CD8-positive, alpha-beta T cell (primary cell): ENCODE measurements at regions of chrX and their contacts with region 1.

Region 1: GRCh38 chrX:52261463-52262194 is 76.9 kb downstream of the MAGED4 start:
- DNase-seq: peak; percentile 66 to 96 (median 86)
- ATAC-seq: peak; percentile 95
- H3K4me3 ChIP-seq: peak overlapping the region; percentile 68 to 92
- H3K4me3 Mint-ChIP-seq: peak overlapping the region; percentile 92
- H3K27ac ChIP-seq: peak overlapping the region; percentile 84 to 93
- H3K27ac Mint-ChIP-seq: peak overlapping the region; percentile 97
- H3K4me1 ChIP-seq: peaks cover 5% of the 10 kb centered on the region
- H3K4me1 Mint-ChIP-seq: peaks cover 12% of the 10 kb centered on the region
- H3K27me3 ChIP-seq: no peaks in the 10 kb centered on the region
- H3K27me3 Mint-ChIP-seq: peaks cover 17% of the 10 kb centered on the region
- CTCF ChIP-seq: peak; percentile 71

Region 2: GRCh38 chrX:51487960-51488267 is 773.7 kb before region 1 on chrX:
- CTCF ChIA-PET with region 1: no interaction called
- POLR2A ChIA-PET with region 1: no interaction called
- intact Hi-C with region 1: loop called in 1 of 2 experiments (anchors 10 kb)
- DNase-seq: no peak
- ATAC-seq: no peak
- H3K4me3 ChIP-seq: no peak overlapping the region
- H3K4me3 Mint-ChIP-seq: no peak overlapping the region
- H3K27ac ChIP-seq: no peak overlapping the region
- H3K27ac Mint-ChIP-seq: no peak overlapping the region
- H3K4me1 ChIP-seq: no peaks in the 10 kb centered on the region
- H3K4me1 Mint-ChIP-seq: no peaks in the 10 kb centered on the region
- H3K27me3 ChIP-seq: no peaks in the 10 kb centered on the region
- H3K27me3 Mint-ChIP-seq: peaks cover 3% of the 10 kb centered on the region
- CTCF ChIP-seq: no peak

Region 3: DNA sequence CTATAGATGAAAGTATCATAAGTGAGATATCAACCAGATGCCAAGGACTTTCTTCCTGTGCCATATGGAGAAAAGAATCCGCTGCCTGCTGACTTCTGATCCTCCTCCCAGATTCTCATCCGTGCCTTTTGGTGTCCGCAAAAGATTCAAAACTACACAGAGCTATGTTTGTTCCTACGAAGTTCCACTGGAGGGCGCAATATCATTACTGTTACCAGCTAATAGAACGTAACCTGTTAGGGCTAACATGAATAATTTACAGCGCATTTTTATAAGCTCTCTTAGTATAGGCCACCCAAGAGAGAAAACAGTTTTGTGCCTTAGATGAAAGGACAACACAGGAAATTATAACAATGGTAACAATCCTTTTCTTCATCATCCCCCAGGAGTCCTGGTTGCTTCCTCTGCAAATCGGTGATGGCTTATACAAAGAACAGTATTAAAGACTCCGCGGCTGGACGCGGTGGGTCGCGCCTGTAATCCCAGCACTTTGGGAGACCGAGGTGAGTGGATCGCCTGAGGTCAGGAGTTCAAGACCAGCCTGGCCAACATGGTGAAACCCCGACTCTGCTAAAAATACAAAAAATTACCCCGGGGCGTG is 620.1 kb before region 1 on chrX:
- CTCF ChIA-PET with region 1: interaction called, 9 read pairs
- POLR2A ChIA-PET with region 1: interaction called, 4 read pairs
- intact Hi-C with region 1: loop called in 1 of 2 experiments (anchors 5 kb)
- DNase-seq: peak in 2 of 9 experiments; percentile 22 to 48
- ATAC-seq: no peak
- H3K4me3 ChIP-seq: no peak overlapping the region
- H3K4me3 Mint-ChIP-seq: no peak overlapping the region
- H3K27ac ChIP-seq: no peak overlapping the region
- H3K27ac Mint-ChIP-seq: no peak overlapping the region
- H3K4me1 ChIP-seq: no peaks in the 10 kb centered on the region
- H3K4me1 Mint-ChIP-seq: no peaks in the 10 kb centered on the region
- H3K27me3 ChIP-seq: no peaks in the 10 kb centered on the region
- H3K27me3 Mint-ChIP-seq: peaks cover 25% of the 10 kb centered on the region
- CTCF ChIP-seq: peak; percentile 27

Region 4: DNA sequence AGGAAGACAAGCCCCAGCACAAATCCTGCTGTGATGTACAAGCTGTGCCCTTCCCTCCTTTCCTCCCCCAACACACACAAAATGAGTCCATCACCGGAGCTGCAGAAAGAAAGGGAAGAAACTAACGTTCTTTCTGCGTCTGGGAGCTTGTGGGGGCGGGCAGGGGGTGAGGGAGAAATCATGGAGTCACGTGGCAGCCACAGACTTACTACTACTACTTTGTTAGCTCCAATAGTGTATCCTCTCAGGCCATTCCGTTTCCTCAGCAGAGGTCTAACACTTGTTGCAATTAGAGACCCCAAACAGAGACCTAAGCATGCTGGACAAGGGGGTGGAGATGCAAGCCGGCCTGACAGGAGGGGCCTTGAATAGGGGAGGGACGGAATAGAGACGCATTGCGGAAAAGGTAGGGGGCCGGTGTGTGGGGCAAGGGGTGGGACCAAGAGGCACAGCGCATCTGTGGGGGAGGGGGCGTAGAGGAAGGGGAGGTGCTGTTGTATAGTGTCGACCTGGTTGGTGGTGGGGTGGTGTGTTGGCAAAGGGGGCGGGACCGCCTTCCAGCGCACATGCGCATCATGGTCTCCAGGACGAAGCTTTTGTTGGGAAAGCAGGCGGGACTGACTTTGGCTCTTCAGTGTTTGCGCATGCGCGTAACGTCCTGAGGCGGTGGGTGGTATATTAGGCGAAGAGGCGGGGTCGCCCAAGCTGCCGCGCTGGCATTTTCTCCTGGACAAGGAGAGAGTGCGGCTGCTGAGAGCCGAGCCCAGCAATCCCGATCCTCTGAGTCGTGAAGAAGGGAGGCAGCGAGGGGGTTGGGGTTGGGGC is 368.5 kb before region 1 on chrX and contains the start of gene MAGED1:
- CTCF ChIA-PET with region 1: no interaction called
- POLR2A ChIA-PET with region 1: no interaction called
- intact Hi-C with region 1: loop called (anchors 2 to 5 kb)
- DNase-seq: peak; percentile 47 to 87 (median 71)
- ATAC-seq: peak; percentile 87
- H3K4me3 ChIP-seq: peak within 1 kb of the TSS; percentile 56 to 68
- H3K4me3 Mint-ChIP-seq: peak within 1 kb of the TSS; percentile 93
- H3K27ac ChIP-seq: peak within 1 kb of the TSS; percentile 30 to 46
- H3K27ac Mint-ChIP-seq: peak within 1 kb of the TSS; percentile 92
- H3K4me1 ChIP-seq: peaks cover 12% of the 10 kb centered on the region
- H3K4me1 Mint-ChIP-seq: peaks cover 34% of the 10 kb centered on the region
- H3K27me3 ChIP-seq: no peaks in the 10 kb centered on the region
- H3K27me3 Mint-ChIP-seq: no peaks in the 10 kb centered on the region
- CTCF ChIP-seq: no peak
- total RNA-seq, gene MAGED1: 30.2 to 30.4 TPM

Region 5: GRCh38 chrX:52995135-52996020 is 733.7 kb after region 1 on chrX:
- CTCF ChIA-PET with region 1: no interaction called
- POLR2A ChIA-PET with region 1: interaction called, 4 read pairs
- intact Hi-C with region 1: loop called in 1 of 2 experiments (anchors 5 kb)
- DNase-seq: peak; percentile 80 to 95 (median 88)
- ATAC-seq: peak; percentile 95
- H3K4me3 ChIP-seq: peak overlapping the region; percentile 72 to 83
- H3K4me3 Mint-ChIP-seq: peak overlapping the region; percentile 98
- H3K27ac ChIP-seq: peak overlapping the region; percentile 97 to 98
- H3K27ac Mint-ChIP-seq: peak overlapping the region; percentile 100
- H3K4me1 ChIP-seq: peaks cover 17% of the 10 kb centered on the region
- H3K4me1 Mint-ChIP-seq: peaks cover 26% of the 10 kb centered on the region
- H3K27me3 ChIP-seq: no peaks in the 10 kb centered on the region
- H3K27me3 Mint-ChIP-seq: no peaks in the 10 kb centered on the region
- CTCF ChIP-seq: peak; percentile 56

Region 6: DNA sequence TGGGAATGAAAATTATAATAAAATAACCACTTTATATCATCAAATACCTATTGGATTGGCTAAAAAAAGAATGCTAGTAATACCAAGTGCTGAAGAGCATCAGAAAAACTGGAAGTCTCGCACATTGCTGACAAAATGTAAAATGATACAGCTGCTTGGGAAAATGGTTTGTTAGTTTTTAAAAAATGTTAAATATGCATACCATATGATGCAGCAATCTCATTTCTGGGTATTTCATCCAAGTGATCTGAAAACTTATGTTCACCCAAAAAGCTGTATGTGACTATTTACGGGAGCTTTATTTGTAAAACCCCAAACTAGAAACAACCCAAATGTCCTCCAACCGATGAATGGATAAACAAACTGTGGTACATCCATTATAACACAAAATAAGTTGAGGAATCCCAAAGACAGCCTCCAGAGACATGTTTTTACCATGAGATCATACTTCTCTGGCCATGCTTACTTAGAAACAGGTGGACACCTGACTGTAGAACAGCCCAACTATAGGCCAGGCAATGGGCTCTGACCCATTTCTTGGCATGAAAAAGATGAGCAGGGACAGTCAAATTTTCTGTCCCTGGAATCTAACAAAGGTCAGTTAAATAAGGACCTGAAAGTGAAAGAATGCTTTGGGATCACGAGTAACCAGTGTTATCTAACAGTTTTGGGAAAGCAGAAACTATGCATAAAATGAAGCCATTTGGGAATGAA is 1969.0 kb after region 1 on chrX:
- CTCF ChIA-PET with region 1: no interaction called
- POLR2A ChIA-PET with region 1: no interaction called
- intact Hi-C with region 1: no loop called
- DNase-seq: no peak
- ATAC-seq: no peak
- H3K4me3 ChIP-seq: no peak overlapping the region
- H3K4me3 Mint-ChIP-seq: no peak overlapping the region
- H3K27ac ChIP-seq: no peak overlapping the region
- H3K27ac Mint-ChIP-seq: no peak overlapping the region
- H3K4me1 ChIP-seq: no peaks in the 10 kb centered on the region
- H3K4me1 Mint-ChIP-seq: no peaks in the 10 kb centered on the region
- H3K27me3 ChIP-seq: no peaks in the 10 kb centered on the region
- H3K27me3 Mint-ChIP-seq: no peaks in the 10 kb centered on the region
- CTCF ChIP-seq: no peak